WTC11 (cell line): ENCODE measurements at regions of chr10 and their contacts with region 1.

Region 1: GRCh38 chr10:71319042-71319799 is at the start of gene SLC29A3:
- DNase-seq: peak; percentile 85
- ATAC-seq: peak; percentile 90
- H3K4me3 Mint-ChIP-seq: peak within 1 kb of the TSS; percentile 98
- H3K27ac Mint-ChIP-seq: peak within 1 kb of the TSS; percentile 93
- H3K4me1 Mint-ChIP-seq: peaks cover 18% of the 10 kb centered on the region
- H3K27me3 Mint-ChIP-seq: no peaks in the 10 kb centered on the region
- CTCF ChIP-seq: peak; percentile 38
- total RNA-seq, gene SLC29A3: 9.2 to 11.1 TPM (median 11.0 TPM) in 3 replicates

Region 2: GRCh38 chr10:71307469-71308085 is 11.6 kb before region 1 on chr10:
- CTCF ChIA-PET with region 1: interaction called, 10 read pairs
- POLR2A ChIA-PET with region 1: no interaction called
- DNase-seq: no peak
- ATAC-seq: no peak
- H3K4me3 Mint-ChIP-seq: no peak overlapping the region
- H3K27ac Mint-ChIP-seq: no peak overlapping the region
- H3K4me1 Mint-ChIP-seq: peaks cover 5% of the 10 kb centered on the region
- H3K27me3 Mint-ChIP-seq: no peaks in the 10 kb centered on the region; the same call in none of the 2 replicates
- CTCF ChIP-seq: no peak

Region 3: DNA sequence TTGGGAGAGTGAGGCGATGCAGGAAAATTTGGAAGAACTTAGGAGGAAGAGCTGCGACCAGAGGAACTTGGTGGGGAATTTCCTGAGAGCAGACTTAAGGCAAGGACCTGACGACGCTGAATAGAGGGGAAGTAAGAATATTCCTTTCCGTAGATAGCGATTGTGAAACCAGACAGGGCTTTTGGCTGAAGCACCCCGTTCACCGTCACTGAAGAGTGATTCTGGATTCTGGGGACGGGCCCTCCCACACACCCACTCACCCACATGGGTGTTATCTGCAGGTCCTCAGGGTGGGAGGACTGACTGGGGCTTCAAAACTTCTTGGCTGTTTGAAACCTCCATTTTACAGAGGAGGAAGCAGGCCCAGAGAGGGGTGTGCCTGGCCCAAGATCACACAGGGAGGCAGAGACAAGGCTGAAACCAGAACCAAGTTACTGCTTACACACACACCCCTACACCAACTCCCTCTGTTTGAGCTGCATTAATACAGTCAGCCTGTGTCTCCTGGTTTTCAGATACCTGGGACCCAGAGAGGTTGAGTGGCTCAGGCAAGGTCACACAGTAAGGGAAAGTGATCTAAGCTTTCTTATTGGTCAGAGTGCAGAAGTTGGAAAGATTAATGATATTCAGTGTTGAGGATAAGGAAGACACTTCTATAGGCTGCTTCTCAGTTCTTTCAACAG is 40.3 kb after region 1 on chr10:
- CTCF ChIA-PET with region 1: interaction called, 28 read pairs
- POLR2A ChIA-PET with region 1: no interaction called
- DNase-seq: no peak
- ATAC-seq: no peak
- H3K4me3 Mint-ChIP-seq: no peak overlapping the region
- H3K27ac Mint-ChIP-seq: no peak overlapping the region
- H3K4me1 Mint-ChIP-seq: peaks cover 4% of the 10 kb centered on the region; the same call in 1 of the 2 replicates
- H3K27me3 Mint-ChIP-seq: no peaks in the 10 kb centered on the region
- CTCF ChIP-seq: no peak

Region 4: GRCh38 chr10:71383972-71384687 is 64.9 kb after region 1 on chr10:
- CTCF ChIA-PET with region 1: interaction called, 107 read pairs
- POLR2A ChIA-PET with region 1: no interaction called
- DNase-seq: peak; percentile 93
- ATAC-seq: peak; percentile 97
- H3K4me3 Mint-ChIP-seq: no peak overlapping the region
- H3K27ac Mint-ChIP-seq: no peak overlapping the region
- H3K4me1 Mint-ChIP-seq: no peaks in the 10 kb centered on the region
- H3K27me3 Mint-ChIP-seq: no peaks in the 10 kb centered on the region
- CTCF ChIP-seq: peak; percentile 96

Region 5: GRCh38 chr10:71431239-71432100 is 112.2 kb after region 1 on chr10:
- CTCF ChIA-PET with region 1: interaction called, 12 read pairs
- POLR2A ChIA-PET with region 1: no interaction called
- DNase-seq: peak; percentile 43
- ATAC-seq: peak; percentile 84
- H3K4me3 Mint-ChIP-seq: no peak overlapping the region
- H3K27ac Mint-ChIP-seq: no peak overlapping the region
- H3K4me1 Mint-ChIP-seq: peaks cover 9% of the 10 kb centered on the region
- H3K27me3 Mint-ChIP-seq: no peaks in the 10 kb centered on the region; the same call in 1 of the 2 replicates
- CTCF ChIP-seq: no peak

Region 6: DNA sequence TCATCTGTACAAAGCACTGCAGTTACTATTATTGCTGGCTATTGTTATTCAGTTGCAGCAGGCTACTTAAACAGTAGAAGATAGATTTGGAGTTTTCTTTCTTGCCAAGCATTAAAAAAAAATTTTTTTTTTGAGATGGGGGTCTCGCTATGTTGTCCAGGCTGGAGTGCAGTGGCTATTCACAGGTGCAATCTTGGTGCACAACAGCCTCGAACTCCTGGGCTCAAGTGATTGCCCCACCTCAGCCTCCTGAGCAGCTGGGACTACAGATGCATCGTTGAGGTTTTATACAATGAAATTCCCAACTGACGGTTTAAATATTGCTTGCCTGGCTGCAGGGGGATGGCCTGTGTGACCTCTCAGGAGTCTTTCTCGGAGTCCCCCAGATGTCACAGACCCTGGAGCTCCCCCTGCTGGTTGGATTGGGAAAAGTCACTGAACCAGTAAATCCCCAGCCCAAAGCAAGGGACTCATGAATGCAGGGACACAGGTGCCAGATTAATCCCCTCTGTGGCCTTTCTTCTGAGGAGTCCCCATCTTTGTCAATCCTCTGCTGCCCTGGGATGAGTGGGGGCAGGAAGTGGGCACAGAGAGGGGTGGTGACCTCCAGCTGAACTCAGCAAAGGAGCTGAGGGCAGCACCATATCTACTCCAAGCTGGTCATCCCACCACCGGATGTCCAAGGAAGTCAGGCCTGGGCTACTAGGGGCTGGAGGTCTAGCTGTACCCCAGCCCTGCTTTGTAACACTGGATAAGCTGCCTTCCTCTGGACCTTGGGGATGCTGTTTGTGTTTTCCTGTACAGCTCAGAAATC is 250.8 kb after region 1 on chr10:
- CTCF ChIA-PET with region 1: interaction called, 21 read pairs
- POLR2A ChIA-PET with region 1: no interaction called
- DNase-seq: peak; percentile 92
- ATAC-seq: peak; percentile 62
- H3K4me3 Mint-ChIP-seq: no peak overlapping the region
- H3K27ac Mint-ChIP-seq: no peak overlapping the region
- H3K4me1 Mint-ChIP-seq: peaks cover 7% of the 10 kb centered on the region
- H3K27me3 Mint-ChIP-seq: no peaks in the 10 kb centered on the region; the same call in 1 of the 2 replicates
- CTCF ChIP-seq: peak; percentile 91